ENCODE measurements at regions of chr6 and their contacts with region 1.

Region 1: DNA sequence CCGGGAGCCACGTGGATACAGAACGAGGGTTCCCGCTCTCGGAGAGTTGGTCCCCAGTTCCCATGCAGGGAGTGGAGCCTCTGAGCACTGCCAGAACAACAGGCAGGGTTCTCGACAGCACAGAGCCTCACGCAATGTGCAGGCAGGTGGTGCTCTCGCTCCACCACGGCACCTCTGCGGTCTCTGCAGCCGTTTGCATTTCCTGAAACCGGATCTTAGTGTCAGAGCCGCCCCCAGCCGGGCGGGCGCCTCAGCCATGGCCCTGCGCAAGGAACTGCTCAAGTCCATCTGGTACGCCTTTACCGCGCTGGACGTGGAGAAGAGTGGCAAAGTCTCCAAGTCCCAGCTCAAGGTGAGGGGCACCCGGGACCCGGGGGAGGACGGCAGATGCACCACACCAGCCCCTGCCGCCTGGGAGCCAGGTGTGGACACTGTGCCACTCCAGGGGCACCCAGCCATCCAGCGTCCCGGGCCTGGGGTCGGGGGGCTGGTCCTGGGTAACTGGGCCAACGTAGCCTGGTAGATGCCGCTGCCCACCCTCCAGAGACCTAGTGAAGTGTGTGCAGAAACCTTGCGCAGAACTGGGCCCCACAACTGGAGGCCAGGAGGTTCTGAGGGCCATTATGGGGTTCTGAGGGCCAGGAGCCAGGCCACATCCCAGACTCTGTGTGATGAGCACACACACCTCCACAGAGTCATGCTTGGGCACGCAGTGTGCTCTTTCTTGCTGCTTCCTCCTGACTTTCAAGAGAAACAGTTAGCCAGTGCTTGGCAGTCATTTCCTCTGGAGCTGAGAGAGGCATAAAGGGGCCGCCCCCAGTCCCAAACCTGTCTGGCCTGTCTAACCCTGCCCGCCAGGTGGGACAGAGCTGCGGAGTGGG is at the start of gene DEF6:
- DNase-seq: peak; percentile 80
- H3K4me3 ChIP-seq: no peak within 1 kb of the TSS
- H3K27ac ChIP-seq: peak within 1 kb of the TSS; percentile 27
- H3K4me1 ChIP-seq: peaks cover 14% of the 10 kb centered on the region
- H3K27me3 ChIP-seq: no peaks in the 10 kb centered on the region
- CTCF ChIP-seq: peak; percentile 74 to 82
- POLR2A ChIP-seq: no peak
- total RNA-seq, gene DEF6: 0.77 and 1.0 TPM in 2 replicates

Region 2: DNA sequence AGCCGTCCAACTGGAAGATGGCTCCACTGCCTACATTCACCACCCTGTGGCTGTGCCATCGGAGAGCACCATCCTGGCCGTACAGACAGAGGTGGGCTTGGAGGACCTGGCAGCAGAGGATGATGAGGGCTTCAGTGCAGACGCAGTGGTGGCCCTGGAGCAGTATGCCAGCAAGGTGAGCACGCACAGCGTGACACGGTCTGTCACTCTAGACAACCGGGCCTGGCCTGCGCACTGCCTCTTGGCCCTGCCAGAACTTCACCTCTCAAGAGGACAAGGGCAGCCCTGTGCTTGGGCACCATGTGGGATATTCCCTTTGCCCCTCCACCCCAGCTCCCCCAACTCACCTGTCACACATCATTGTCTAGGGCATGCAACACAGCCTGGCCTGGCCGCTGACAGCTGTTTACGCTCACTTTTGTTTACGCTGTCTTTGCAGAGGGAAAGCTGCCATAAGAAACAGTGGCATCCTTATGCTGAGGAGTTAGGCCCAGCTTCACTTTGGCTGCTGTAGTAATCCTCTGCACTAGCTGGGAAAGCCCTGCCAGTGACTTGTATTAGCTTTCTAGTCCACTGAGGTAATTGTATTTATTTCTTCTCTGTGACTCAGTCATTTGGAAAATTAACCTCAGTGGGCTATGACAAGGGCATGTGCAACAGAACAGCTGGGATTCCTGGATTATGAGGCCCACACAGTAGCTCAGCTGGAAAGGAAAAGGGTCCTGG is 10.0 kb before region 1 on chr6:
- CTCF ChIA-PET with region 1: interaction called, 10 read pairs
- POLR2A ChIA-PET with region 1: no interaction called
- dilution Hi-C with region 1: no loop called
- intact Hi-C with region 1: no loop called
- DNase-seq: no peak
- H3K4me3 ChIP-seq: no peak overlapping the region
- H3K27ac ChIP-seq: no peak overlapping the region
- H3K4me1 ChIP-seq: no peaks in the 10 kb centered on the region
- H3K27me3 ChIP-seq: no peaks in the 10 kb centered on the region
- CTCF ChIP-seq: no peak
- POLR2A ChIP-seq: no peak

Region 3: GRCh38 chr6:35318196-35319171 is 20.6 kb after region 1 on chr6:
- CTCF ChIA-PET with region 1: interaction called, 23 read pairs
- POLR2A ChIA-PET with region 1: no interaction called
- dilution Hi-C with region 1: no loop called
- intact Hi-C with region 1: loop called (anchors 2 kb)
- DNase-seq: peak; percentile 85
- H3K4me3 ChIP-seq: peak overlapping the region; percentile 23 to 52 (median 31)
- H3K27ac ChIP-seq: no peak overlapping the region
- H3K4me1 ChIP-seq: peaks cover 5% of the 10 kb centered on the region
- H3K27me3 ChIP-seq: peaks cover 9 to 15% of the 10 kb centered on the region in 2 experiments
- CTCF ChIP-seq: peak in 1 of 2 donors; percentile 13
- POLR2A ChIP-seq: no peak

Region 4: GRCh38 chr6:35327349-35328027 is 29.6 kb after region 1 on chr6:
- CTCF ChIA-PET with region 1: interaction called, 67 read pairs
- POLR2A ChIA-PET with region 1: no interaction called
- dilution Hi-C with region 1: no loop called
- intact Hi-C with region 1: loop called (anchors 1 kb)
- DNase-seq: peak; percentile 58
- H3K4me3 ChIP-seq: no peak overlapping the region
- H3K27ac ChIP-seq: no peak overlapping the region
- H3K4me1 ChIP-seq: no peaks in the 10 kb centered on the region
- H3K27me3 ChIP-seq: peaks cover 0 to 5% of the 10 kb centered on the region in 2 experiments
- CTCF ChIP-seq: peak; percentile 53 to 78
- POLR2A ChIP-seq: no peak

Region 5: GRCh38 chr6:35468181-35468979 is 170.5 kb after region 1 on chr6 and contains the start of gene RPL10A:
- CTCF ChIA-PET with region 1: interaction called, 15 read pairs
- POLR2A ChIA-PET with region 1: no interaction called
- dilution Hi-C with region 1: no loop called
- intact Hi-C with region 1: loop called (anchors 1 kb)
- DNase-seq: peak; percentile 97
- H3K4me3 ChIP-seq: peak within 1 kb of the TSS; percentile 69 to 95 (median 92)
- H3K27ac ChIP-seq: peak within 1 kb of the TSS; percentile 76
- H3K4me1 ChIP-seq: peaks cover 26% of the 10 kb centered on the region
- H3K27me3 ChIP-seq: no peaks in the 10 kb centered on the region
- CTCF ChIP-seq: peak; percentile 99 to 100
- POLR2A ChIP-seq: peak; percentile 100
- total RNA-seq, gene RPL10A: 1,327 and 1,339 TPM in 2 replicates

Region 6: GRCh38 chr6:35552285-35552917 is 254.6 kb after region 1 on chr6:
- CTCF ChIA-PET with region 1: interaction called, 8 read pairs
- POLR2A ChIA-PET with region 1: no interaction called
- dilution Hi-C with region 1: no loop called
- intact Hi-C with region 1: loop called (anchors 1 kb)
- DNase-seq: peak; percentile 44
- H3K4me3 ChIP-seq: no peak overlapping the region
- H3K27ac ChIP-seq: no peak overlapping the region
- H3K4me1 ChIP-seq: no peaks in the 10 kb centered on the region
- H3K27me3 ChIP-seq: peaks cover 4 to 7% of the 10 kb centered on the region in 2 experiments
- CTCF ChIP-seq: peak; percentile 80 to 90
- POLR2A ChIP-seq: no peak